ENCODE measurements at regions of chr4 and their contacts with region 1.

Region 1: DNA sequence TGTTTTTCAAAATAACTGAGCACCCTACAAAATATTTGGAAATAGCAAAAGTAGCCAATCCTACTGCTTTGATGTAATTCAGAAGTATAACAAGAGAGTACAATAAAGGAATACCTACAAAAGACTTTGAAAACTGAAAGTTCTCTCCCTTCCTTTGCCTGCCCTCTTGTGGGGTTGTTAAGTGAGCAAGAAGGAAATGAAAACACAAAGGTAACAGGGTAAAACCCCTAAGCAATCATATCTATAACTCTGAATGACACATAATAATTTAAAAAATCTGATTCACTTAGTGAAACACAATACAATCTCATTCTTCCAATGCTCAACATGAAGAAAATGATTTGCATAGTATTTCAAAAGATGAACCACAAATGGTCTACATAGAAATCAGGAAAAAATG is 98.2 kb downstream of the FRYL start:
- DNase-seq: peak; percentile 51
- H3K4me3 Mint-ChIP-seq: no peak overlapping the region
- H3K27ac Mint-ChIP-seq: peak overlapping the region; percentile 63
- H3K4me1 Mint-ChIP-seq: peaks cover 38% of the 10 kb centered on the region
- H3K27me3 Mint-ChIP-seq: no peaks in the 10 kb centered on the region

Region 2: DNA sequence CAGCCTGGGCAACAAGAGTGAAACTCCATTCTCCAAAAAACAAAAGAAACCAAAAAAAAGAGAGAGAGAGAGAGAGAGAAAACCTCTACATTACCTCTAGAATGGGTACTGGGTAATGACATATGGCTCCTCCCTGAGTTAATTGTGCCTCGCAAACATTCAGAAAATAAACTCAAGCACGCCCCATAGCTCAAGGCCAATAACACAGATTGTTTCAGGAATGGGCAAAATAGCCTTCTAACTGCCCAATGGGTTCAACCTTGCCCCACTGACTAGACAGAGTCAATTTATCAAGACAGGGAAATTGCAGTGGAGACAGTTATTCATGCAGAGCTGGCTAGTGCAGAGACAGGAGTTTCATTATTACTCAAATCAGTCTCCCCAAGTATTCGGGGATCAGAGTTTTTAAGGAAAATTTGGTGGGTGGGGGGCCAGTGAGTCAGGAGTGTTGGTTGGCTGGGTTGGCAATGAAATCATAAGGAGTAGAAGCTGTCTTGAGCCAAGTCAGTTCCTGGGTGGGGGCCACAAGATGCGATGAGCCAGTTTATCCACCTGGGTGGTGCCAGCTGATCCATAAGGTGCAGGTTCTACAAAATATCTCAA is 640.2 kb before region 1 on chr4:
- CTCF ChIA-PET with region 1: no interaction called
- intact Hi-C with region 1: loop called (anchors 5 kb)
- DNase-seq: no peak
- H3K4me3 Mint-ChIP-seq: no peak overlapping the region
- H3K27ac Mint-ChIP-seq: no peak overlapping the region
- H3K4me1 Mint-ChIP-seq: peaks cover 72% of the 10 kb centered on the region
- H3K27me3 Mint-ChIP-seq: no peaks in the 10 kb centered on the region

Region 3: DNA sequence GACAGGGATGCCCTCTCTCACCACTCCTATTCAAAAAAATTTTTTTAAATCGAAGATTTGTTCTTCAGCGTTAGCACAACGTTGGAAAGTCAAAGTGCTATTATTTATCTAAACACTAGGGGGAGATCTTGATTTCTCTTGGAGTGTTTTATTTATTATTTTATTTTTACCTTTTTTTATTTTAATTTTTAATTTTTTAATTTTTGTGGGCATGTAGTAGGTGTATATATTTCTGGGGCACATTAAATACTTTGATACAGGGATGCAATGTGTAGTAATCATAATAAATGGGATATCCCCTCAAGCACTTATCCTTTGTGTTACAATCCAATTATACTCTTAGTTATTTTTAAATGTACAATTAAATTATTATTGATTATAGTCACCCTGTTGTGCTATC is 236.2 kb before region 1 on chr4:
- CTCF ChIA-PET with region 1: no interaction called
- intact Hi-C with region 1: loop called (anchors 5 kb)
- DNase-seq: no peak
- H3K4me3 Mint-ChIP-seq: no peak overlapping the region
- H3K27ac Mint-ChIP-seq: no peak overlapping the region
- H3K4me1 Mint-ChIP-seq: no peaks in the 10 kb centered on the region
- H3K27me3 Mint-ChIP-seq: peaks cover 3% of the 10 kb centered on the region

Region 4: DNA sequence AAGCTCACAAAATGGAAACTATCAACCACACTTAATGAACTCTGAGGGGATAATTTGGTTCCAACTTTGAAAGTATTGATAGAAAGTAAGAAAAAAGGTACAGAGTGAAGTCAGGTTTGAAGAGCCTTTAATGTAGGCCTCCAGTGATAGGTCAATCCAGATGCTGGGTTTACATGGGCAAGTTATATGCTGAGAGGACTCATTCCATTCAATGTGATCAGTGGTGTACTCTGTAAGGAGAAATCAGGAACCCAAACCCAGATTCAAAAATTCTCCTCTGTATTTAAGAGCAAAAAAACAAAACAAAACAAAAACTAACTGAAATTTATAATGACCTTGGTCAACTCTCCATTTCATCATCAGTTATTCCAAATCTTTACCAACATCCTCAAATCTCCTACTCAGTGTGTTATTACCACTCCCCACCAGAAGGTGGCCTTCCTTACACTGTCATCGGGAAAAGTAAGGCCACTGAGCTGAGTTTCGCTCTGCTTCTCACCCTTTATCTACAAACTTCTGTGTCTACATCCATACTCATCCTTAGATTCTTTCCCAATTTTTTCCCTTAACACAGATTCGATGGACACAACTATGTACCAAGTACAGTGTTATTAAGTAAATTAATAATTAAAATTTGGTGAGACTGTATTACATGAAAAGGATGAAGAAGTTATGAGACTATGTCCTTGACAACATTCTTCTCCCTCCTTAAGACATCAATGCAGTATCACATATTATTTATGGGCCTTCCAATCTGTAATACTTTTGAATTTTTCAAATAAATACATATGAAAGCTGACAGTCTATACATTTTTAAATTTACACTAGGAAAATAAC is 103.5 kb before region 1 on chr4:
- CTCF ChIA-PET with region 1: interaction called, 30 read pairs
- intact Hi-C with region 1: loop called (anchors 1 kb)
- DNase-seq: peak; percentile 72
- H3K4me3 Mint-ChIP-seq: no peak overlapping the region
- H3K27ac Mint-ChIP-seq: no peak overlapping the region
- H3K4me1 Mint-ChIP-seq: peaks cover 7% of the 10 kb centered on the region
- H3K27me3 Mint-ChIP-seq: no peaks in the 10 kb centered on the region

Region 5: GRCh38 chr4:48698029-48698971 is 16.4 kb after region 1 on chr4:
- CTCF ChIA-PET with region 1: interaction called, 3 read pairs
- intact Hi-C with region 1: loop called (anchors 1 kb)
- DNase-seq: no peak
- H3K4me3 Mint-ChIP-seq: no peak overlapping the region
- H3K27ac Mint-ChIP-seq: no peak overlapping the region
- H3K4me1 Mint-ChIP-seq: peaks cover 55% of the 10 kb centered on the region
- H3K27me3 Mint-ChIP-seq: no peaks in the 10 kb centered on the region

Region 6: GRCh38 chr4:48963042-48963679 is 281.3 kb after region 1 on chr4:
- CTCF ChIA-PET with region 1: interaction called, 3 read pairs
- intact Hi-C with region 1: loop called (anchors 1 kb)
- DNase-seq: peak; percentile 89
- H3K4me3 Mint-ChIP-seq: no peak overlapping the region
- H3K27ac Mint-ChIP-seq: no peak overlapping the region
- H3K4me1 Mint-ChIP-seq: no peaks in the 10 kb centered on the region
- H3K27me3 Mint-ChIP-seq: no peaks in the 10 kb centered on the region

Region 7: DNA sequence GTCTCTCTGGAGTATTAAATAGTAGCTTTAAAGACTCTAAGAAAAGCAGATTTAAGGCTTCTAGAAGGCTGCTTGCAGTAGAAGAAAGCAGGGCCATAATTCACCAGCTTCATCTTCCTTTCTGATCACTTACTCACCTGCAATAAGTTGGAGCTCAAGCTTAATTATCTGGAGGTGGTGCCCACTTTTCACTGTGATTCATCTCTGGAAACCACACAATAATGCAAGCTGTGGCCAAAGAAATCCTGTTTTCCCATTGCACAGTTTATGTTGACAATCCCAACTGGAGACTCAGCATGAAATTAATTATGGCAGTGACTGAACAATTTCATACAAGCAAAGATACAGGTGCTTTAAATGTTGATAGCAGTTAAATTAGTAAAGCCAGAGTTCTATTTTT is 318.9 kb after region 1 on chr4:
- CTCF ChIA-PET with region 1: no interaction called
- intact Hi-C with region 1: no loop called
- DNase-seq: no peak
- H3K4me3 Mint-ChIP-seq: no peak overlapping the region
- H3K27ac Mint-ChIP-seq: no peak overlapping the region
- H3K4me1 Mint-ChIP-seq: no peaks in the 10 kb centered on the region
- H3K27me3 Mint-ChIP-seq: peaks cover 8% of the 10 kb centered on the region